ENCODE measurements at regions of chr9 and their contacts with region 1.

Region 1: GRCh38 chr9:112333639-112334431 is 416 bp upstream of the PTBP3 start:
- DNase-seq: peak; percentile 94
- H3K4me3 ChIP-seq: peak overlapping the region; percentile 99
- H3K27ac ChIP-seq: peak overlapping the region; percentile 97 to 100
- H3K4me1 ChIP-seq: no peaks in the 10 kb centered on the region
- H3K27me3 ChIP-seq: no peaks in the 10 kb centered on the region
- CTCF ChIP-seq: peak; percentile 62 to 81 (median 68)
- POLR2A ChIP-seq: no peak

Region 2: GRCh38 chr9:111896353-111896958 is 437.4 kb before region 1 on chr9 and contains the start of gene UGCG:
- intact Hi-C with region 1: loop called (anchors 2 kb)
- DNase-seq: peak; percentile 84
- H3K4me3 ChIP-seq: peak within 1 kb of the TSS; percentile 96 to 98
- H3K27ac ChIP-seq: peak within 1 kb of the TSS; percentile 95
- H3K4me1 ChIP-seq: no peaks in the 10 kb centered on the region
- H3K27me3 ChIP-seq: no peaks in the 10 kb centered on the region
- CTCF ChIP-seq: peak in 2 of 4 experiments; percentile 10 to 15
- POLR2A ChIP-seq: peak; percentile 96
- total RNA-seq, gene UGCG: 23.9 to 42.6 TPM

Region 3: DNA sequence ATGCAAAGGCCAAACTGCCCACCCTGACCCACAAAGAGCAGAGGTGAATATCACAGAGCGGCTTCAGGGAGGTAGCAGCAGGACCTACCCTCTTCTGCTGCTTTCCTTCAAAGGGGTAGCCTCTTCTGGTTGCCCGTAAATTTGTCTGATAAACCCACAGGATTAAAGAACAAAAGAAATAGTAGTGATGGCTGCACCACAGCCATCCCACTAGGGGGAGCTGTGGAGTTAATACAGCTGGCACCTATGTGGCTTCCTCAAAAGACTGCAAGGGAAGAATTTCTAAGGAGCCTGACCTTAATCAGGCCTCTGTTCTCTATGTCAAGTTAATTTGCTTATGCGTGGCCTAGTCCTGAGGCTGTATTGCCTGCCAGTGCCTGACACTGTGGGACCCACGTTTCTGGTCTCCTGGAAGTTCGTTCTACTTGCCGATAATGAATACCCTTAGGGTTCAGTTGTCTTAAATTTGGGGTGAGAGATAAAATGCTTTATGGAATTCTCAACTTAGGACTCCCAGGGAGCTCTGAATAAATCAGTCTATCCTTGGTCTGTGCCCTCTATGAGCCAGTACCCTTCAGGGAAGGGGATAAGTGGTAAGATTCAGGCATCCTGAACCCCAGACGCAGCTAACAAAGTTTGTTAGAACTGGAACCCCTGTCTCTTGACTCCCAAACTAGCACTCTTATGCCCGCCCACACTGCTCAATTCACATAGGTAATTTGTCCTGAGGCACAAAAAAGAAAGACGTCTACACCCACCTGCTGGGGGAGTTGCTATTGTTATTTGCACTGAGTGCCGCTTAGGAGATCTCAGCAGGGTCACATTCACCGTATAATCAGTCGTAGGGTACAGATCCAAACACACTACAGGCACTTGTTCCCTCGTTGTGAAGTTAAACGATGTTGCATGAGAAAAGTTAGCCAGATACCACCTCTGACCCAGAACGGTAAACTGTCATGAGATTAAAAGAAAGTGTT is 235.8 kb before region 1 on chr9:
- intact Hi-C with region 1: loop called (anchors 5 kb)
- DNase-seq: peak; percentile 31
- H3K4me3 ChIP-seq: no peak overlapping the region
- H3K27ac ChIP-seq: no peak overlapping the region
- H3K4me1 ChIP-seq: no peaks in the 10 kb centered on the region
- H3K27me3 ChIP-seq: no peaks in the 10 kb centered on the region
- CTCF ChIP-seq: peak; percentile 44 to 85 (median 80)
- POLR2A ChIP-seq: no peak

Region 4: DNA sequence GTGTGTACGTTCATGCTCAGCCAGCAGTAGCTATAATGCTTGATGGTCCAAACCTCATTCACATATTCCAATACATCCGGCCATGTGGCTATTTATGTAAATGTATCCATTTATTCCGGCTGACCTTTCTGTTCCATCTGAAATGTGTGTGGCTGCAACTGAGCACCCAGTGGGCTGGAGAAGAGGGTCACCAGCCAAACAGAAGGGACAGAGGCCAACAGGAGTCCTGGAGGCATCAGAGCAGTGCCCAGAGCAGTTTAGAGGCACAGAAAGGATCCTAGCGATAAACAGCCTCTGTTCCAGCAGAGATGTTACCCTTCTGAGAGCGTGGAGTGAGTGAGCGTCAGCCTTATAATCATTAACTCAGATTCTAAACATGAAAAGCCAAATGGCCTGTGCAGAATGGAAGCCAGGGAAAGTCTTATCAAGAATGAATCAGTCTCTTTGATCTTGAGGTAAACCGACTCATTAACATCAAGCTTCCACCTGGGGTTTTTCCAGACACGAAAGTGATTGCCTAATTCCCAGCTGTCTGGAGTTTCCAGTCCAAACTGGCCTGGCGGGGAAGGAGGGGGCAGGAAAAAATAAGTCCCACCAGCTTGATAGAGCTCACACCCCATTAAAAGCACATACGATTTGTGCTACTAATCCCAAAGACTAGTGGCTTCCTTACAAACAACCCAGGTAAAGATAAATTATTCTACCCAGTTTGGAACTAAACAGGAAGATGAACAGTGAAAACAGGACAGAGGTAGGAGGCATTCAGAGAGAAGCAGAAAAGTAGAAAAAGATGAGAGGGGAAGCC is 214.4 kb before region 1 on chr9:
- intact Hi-C with region 1: no loop called
- DNase-seq: peak; percentile 9
- H3K4me3 ChIP-seq: no peak overlapping the region
- H3K27ac ChIP-seq: no peak overlapping the region
- H3K4me1 ChIP-seq: no peaks in the 10 kb centered on the region
- H3K27me3 ChIP-seq: no peaks in the 10 kb centered on the region
- CTCF ChIP-seq: no peak
- POLR2A ChIP-seq: no peak

Region 5: GRCh38 chr9:112166172-112167140 is 167.4 kb before region 1 on chr9:
- intact Hi-C with region 1: loop called (anchors 5 kb)
- DNase-seq: no peak
- H3K4me3 ChIP-seq: no peak overlapping the region
- H3K27ac ChIP-seq: no peak overlapping the region
- H3K4me1 ChIP-seq: no peaks in the 10 kb centered on the region
- H3K27me3 ChIP-seq: no peaks in the 10 kb centered on the region
- CTCF ChIP-seq: peak in 2 of 4 experiments; percentile 19 to 37
- POLR2A ChIP-seq: no peak

Region 6: GRCh38 chr9:112379177-112380101 is 45.6 kb after region 1 on chr9:
- intact Hi-C with region 1: loop called (anchors 5 kb)
- DNase-seq: peak; percentile 99
- H3K4me3 ChIP-seq: peak overlapping the region; percentile 50 to 61
- H3K27ac ChIP-seq: peak overlapping the region; percentile 96 to 98
- H3K4me1 ChIP-seq: no peaks in the 10 kb centered on the region
- H3K27me3 ChIP-seq: no peaks in the 10 kb centered on the region
- CTCF ChIP-seq: peak in 2 of 4 experiments; percentile 23 to 26
- POLR2A ChIP-seq: peak; percentile 95

Region 7: GRCh38 chr9:112421771-112422222 is 88.0 kb after region 1 on chr9:
- intact Hi-C with region 1: no loop called
- DNase-seq: no peak
- H3K4me3 ChIP-seq: no peak overlapping the region
- H3K27ac ChIP-seq: no peak overlapping the region
- H3K4me1 ChIP-seq: no peaks in the 10 kb centered on the region
- H3K27me3 ChIP-seq: no peaks in the 10 kb centered on the region
- CTCF ChIP-seq: no peak
- POLR2A ChIP-seq: no peak

Region 8: DNA sequence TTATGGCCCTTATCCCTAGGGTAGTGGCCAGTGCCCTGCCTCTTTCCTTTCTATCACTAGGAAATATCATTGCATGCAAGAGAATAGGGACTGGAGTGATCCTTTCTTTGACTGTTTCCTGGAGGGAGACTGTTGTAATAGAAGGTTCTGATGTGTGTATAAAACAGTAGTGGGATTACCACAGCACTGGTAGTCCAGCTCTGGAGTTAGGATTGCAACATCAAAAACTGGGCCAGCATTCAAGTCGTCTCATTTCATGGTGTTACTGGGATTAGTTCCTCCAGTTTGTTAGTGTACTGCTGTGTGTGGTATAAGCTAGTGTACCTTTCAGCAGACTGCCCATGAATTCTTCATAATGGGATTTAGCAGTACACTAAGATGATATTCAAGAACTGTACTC is 198.6 kb after region 1 on chr9:
- intact Hi-C with region 1: no loop called
- DNase-seq: no peak
- H3K4me3 ChIP-seq: no peak overlapping the region
- H3K27ac ChIP-seq: no peak overlapping the region
- H3K4me1 ChIP-seq: no peaks in the 10 kb centered on the region
- H3K27me3 ChIP-seq: no peaks in the 10 kb centered on the region
- CTCF ChIP-seq: no peak
- POLR2A ChIP-seq: no peak

Region 9: GRCh38 chr9:112717661-112718341 is 384.0 kb after region 1 on chr9 and contains the start of gene INIP:
- intact Hi-C with region 1: loop called (anchors 10 kb)
- DNase-seq: peak; percentile 95
- H3K4me3 ChIP-seq: peak within 1 kb of the TSS; percentile 63 to 74
- H3K27ac ChIP-seq: peak within 1 kb of the TSS; percentile 85 to 87
- H3K4me1 ChIP-seq: no peaks in the 10 kb centered on the region
- H3K27me3 ChIP-seq: no peaks in the 10 kb centered on the region
- CTCF ChIP-seq: peak in 3 of 4 experiments; percentile 13 to 29 (median 23)
- POLR2A ChIP-seq: peak; percentile 86
- total RNA-seq, gene INIP: 21.0 to 36.6 TPM

Region 10: DNA sequence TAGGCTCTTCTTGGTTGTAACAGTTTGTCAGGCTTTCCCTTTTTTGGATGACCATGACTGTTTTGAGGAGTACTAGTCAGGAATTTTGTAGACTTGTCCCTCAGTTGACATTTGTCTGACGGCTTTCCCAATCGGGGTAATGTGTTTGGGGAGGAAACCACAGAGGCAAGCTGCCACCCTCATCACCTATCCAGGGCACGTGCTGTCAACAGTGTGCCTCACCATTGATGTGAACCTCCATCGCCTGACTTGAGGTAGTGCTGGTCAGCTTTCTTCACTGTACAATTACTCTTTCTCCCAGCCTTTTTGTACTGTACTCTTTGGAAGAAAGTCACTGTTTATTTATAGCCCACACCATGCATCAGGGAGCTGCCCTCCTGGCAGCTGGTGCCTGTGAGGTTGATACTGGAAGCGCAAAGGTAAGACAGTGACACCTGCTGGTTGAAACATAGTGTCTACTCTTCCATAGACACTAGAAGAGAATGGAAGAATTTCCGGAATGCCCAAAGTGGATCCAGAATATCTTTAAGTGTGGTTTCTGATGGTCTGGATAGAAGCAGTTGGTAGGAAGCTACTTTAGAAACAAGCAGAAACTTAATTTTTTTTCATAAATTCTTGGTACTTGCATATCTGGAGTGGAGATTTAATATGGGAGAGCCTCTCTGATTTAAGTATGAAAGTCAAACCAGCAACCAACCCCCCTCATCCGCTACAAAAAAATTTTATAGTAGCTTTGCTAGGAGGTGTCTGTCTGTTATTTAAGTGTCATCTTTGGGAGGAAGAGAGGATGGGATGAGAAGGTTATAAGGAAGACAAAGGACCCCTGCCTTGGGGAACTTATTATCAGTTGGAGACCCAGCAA is 486.0 kb after region 1 on chr9:
- intact Hi-C with region 1: loop called (anchors 10 kb)
- DNase-seq: peak; percentile 28
- H3K4me3 ChIP-seq: no peak overlapping the region
- H3K27ac ChIP-seq: no peak overlapping the region
- H3K4me1 ChIP-seq: no peaks in the 10 kb centered on the region
- H3K27me3 ChIP-seq: no peaks in the 10 kb centered on the region
- CTCF ChIP-seq: peak in 3 of 4 experiments; percentile 59 to 67 (median 64)
- POLR2A ChIP-seq: no peak

Region 11: GRCh38 chr9:112887381-112887780 is 553.5 kb after region 1 on chr9:
- intact Hi-C with region 1: no loop called
- DNase-seq: no peak
- H3K4me3 ChIP-seq: no peak overlapping the region
- H3K27ac ChIP-seq: no peak overlapping the region
- H3K4me1 ChIP-seq: no peaks in the 10 kb centered on the region
- H3K27me3 ChIP-seq: no peaks in the 10 kb centered on the region
- CTCF ChIP-seq: no peak
- POLR2A ChIP-seq: no peak